Head of caudate nucleus (tissue), 42 donors: ENCODE measurements at regions of chr9 and their contacts with region 1.

Region 1: DNA sequence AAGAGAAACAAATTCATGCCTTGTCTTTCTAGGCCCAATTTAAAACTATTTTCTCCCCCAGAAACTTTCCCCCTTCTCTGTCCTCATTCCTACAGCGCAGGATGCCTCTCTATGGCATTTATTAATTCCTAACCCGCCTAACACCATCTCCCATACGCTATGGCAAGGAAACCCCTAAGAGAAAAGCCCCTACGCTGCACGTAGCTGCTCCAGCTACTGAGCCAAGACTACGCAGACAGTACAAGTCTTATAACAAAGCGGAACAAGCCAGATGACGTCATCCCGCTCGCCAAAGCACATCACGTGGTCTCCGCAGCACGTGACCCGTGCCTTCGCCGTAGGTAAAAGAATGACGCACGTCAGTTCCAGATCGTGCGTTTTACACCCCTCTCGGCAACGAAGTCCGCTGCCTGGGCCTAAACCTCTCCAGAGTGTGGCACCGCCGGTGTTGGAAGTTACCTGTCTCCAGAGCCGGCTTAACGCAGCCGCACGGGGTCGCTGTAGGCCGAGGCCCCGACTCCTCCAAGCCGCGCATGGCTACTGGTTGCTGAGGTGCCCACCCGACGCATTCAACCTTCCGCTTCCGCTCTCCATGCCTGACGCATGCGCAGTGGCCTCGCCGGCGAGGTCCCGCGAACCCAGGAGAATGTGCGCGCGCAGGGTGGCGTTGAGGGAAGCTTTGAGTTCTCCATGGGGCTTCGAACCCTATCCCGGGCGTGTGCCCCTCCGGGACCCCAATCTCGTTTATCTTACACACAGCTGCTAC is at the start of gene TRMO:
- DNase-seq: peak; percentile 87 to 99 (median 96)

Region 2: GRCh38 chr9:97982683-97983588 is 60.8 kb after region 1 on chr9 and contains the start of gene ANP32B:
- intact Hi-C with region 1: loop called (anchors 5 kb)
- DNase-seq: peak; percentile 79 to 97 (median 93)

Region 3: DNA sequence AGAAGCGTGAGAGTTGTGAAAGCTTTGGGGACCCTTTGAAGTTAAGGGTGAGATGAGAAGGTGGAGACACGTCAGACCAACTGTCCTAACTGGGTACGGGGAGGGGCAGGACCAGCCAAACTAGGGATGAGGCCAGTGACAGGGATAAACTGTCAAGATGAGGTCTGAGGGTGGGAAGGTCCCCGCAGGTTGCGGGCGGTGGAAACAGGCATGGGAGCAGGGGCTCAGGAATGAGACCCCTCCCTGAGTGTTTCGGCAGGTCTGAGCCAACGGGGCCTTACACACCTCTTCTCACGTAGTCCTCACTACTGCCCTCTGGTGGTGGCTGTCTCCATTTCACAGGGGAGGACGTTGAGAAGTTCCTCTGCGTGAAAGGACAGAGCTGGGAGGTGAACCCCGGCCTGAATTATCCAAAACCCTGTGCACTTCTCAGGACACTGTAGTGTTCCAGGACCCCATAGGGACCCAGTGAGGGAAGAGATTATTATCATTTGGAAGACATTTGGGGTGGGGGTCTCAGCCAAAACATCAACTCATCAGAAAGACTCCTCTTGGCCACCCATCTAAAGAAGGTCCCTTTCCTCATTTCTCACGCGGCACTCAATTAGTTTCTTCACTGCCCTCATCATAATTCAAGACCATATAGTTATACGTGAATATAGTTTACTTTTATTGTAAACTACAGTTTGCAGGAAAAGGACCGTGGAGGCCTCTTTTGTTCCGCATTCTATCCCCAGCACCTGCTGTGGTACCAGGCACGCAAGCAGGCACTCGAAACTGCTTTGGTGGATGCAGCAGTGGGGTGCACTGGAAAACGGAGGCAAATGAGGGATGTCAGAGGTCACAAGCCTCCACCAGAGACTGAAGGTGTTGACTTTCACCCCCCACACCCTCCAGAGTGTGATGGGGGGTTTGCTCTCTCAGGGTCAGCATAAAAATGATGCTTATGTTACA is 112.7 kb after region 1 on chr9:
- intact Hi-C with region 1: loop called (anchors 2 kb)
- DNase-seq: peak; percentile 66 to 95 (median 86)

Region 4: DNA sequence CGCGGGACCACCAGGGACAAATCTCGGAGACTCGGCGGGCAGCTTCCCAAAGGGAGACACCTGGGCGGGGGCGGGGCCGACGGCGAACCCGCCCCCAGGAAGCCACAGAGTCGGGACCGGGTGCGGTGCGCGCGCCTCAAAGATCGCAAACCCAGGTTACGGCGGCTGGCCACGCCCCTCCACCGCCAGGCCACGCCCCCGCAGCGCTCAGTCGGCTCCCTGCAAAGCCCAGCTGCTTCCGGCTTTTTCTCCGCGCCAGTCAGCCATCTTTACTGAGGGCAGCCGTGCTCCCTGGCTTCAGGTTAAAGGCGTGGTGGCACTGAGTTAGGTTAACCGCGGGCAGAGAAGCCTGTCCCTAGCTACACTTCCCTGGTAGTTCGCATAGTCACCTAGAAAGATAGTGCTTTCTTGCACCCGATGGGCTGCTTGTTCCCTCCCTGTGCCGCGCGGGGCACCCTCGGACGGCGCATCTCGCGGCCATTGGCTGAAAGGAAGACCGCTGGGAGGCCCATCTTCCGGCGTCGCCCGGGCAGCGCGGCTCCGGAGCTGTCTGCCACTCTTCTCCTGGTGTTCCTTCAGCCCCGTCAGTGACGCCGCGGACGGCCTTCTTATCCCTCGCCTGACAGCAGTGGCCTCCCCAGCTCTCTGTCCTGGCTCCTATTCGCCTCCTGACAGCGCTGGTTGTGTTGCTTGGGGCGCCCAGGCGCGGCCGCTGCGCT is 333.6 kb after region 1 on chr9 and contains the start of gene TBC1D2:
- intact Hi-C with region 1: loop called (anchors 5 kb)
- DNase-seq: peak; percentile 88 to 98 (median 94)